ENCODE measurements at regions of chr1 and their contacts with region 1.

Region 1: DNA sequence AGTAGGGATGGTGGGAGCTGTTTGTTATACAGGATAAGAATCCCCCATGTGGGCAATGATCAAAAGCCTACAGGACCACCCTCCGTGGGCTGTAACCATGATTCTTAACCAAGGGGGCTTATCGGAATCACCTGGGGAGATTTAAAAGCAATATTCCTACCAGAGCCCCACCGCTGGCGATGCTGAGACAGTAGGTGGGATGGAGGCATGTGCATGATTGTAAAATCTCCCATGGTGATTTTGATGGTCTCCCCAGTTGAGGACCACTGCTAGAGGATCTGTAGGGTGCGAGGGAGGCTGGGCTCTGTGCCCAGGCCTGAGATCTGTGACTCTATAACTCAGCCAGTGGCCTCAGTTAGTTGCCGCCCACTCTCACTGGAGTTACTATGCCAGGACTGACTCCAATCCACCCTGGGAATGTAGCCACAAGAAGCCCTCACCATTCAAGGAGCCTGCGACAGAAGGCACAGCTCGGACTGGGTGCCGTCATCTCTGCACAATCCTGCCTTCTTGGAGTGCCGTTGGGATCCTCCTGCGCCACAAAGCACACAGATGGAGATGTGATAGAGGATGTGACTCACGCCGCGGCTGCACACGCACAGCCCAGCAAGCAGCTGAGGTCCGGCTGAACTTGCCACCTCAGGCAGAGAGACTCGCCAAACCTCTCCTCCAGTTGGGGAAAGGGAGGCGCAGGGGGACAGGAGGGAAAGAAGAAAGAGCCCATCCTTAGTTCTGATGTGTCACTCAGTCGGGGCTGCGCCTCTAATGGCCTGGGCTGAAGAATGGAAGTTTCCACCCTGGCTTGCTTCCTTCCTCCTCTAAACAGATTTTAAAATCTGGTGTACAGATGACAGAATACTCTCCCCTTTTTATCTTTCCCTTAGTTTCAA is 26.5 kb downstream of the AKNAD1 start:
- DNase-seq: peak; percentile 54 to 76
- H3K4me3 ChIP-seq: peak overlapping the region; percentile 18 to 54 (median 26)
- H3K27ac ChIP-seq: peak overlapping the region; percentile 73 to 94
- H3K4me1 ChIP-seq: peaks cover 0 to 2% of the 10 kb centered on the region in 2 donors
- H3K27me3 ChIP-seq: no peaks in the 10 kb centered on the region
- CTCF ChIP-seq: no peak
- POLR2A ChIP-seq: no peak

Region 2: GRCh38 chr1:108892356-108893140 is 62.2 kb after region 1 on chr1:
- intact Hi-C with region 1: loop called (anchors 2 kb)
- DNase-seq: no peak
- H3K4me3 ChIP-seq: no peak overlapping the region
- H3K27ac ChIP-seq: no peak overlapping the region
- H3K4me1 ChIP-seq: no peaks in the 10 kb centered on the region
- H3K27me3 ChIP-seq: no peaks in the 10 kb centered on the region
- CTCF ChIP-seq: no peak
- POLR2A ChIP-seq: no peak